ENCODE measurements at regions of chr4 and their contacts with region 1.

Region 1: GRCh38 chr4:39846120-39846519 is 131.6 kb downstream of the PDS5A start:
- DNase-seq: no peak
- ATAC-seq: no peak
- H3K4me3 Mint-ChIP-seq: no peak overlapping the region
- H3K27ac Mint-ChIP-seq: no peak overlapping the region
- H3K4me1 Mint-ChIP-seq: no peaks in the 10 kb centered on the region
- H3K27me3 Mint-ChIP-seq: no peaks in the 10 kb centered on the region
- CTCF ChIP-seq: no peak

Region 2: DNA sequence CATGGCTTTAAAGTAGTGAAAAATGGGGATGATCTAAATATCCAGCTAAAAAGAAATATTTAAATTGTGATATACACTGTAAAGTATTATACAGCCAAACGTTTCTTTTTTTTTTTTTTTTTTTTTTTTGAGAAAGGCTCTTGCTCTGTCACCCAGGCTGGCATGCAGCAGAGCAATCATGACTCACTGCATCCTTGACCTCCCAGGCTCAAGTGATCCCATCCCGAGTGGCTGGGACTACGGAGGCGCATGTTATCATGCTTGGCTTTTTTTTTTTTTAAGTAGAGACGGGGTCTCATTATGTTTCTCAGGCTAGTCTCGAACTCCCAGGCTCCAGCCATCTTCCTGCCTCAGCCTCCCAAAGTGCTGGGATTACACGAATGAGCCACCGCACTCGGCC is 224.5 kb before region 1 on chr4:
- CTCF ChIA-PET with region 1: no interaction called
- POLR2A ChIA-PET with region 1: no interaction called
- intact Hi-C with region 1: no loop called
- DNase-seq: no peak
- ATAC-seq: no peak
- H3K4me3 Mint-ChIP-seq: no peak overlapping the region
- H3K27ac Mint-ChIP-seq: no peak overlapping the region
- H3K4me1 Mint-ChIP-seq: peaks cover 5% of the 10 kb centered on the region
- H3K27me3 Mint-ChIP-seq: no peaks in the 10 kb centered on the region
- CTCF ChIP-seq: no peak

Region 3: GRCh38 chr4:39741401-39741800 is 104.7 kb before region 1 on chr4:
- CTCF ChIA-PET with region 1: no interaction called
- POLR2A ChIA-PET with region 1: no interaction called
- intact Hi-C with region 1: no loop called
- DNase-seq: no peak
- ATAC-seq: no peak
- H3K4me3 Mint-ChIP-seq: no peak overlapping the region
- H3K27ac Mint-ChIP-seq: no peak overlapping the region
- H3K4me1 Mint-ChIP-seq: peaks cover 14% of the 10 kb centered on the region
- H3K27me3 Mint-ChIP-seq: no peaks in the 10 kb centered on the region
- CTCF ChIP-seq: no peak

Region 4: GRCh38 chr4:39792529-39792928 is 53.6 kb before region 1 on chr4:
- CTCF ChIA-PET with region 1: no interaction called
- POLR2A ChIA-PET with region 1: no interaction called
- intact Hi-C with region 1: loop called (anchors 2 kb)
- DNase-seq: no peak
- ATAC-seq: no peak
- H3K4me3 Mint-ChIP-seq: no peak overlapping the region
- H3K27ac Mint-ChIP-seq: no peak overlapping the region
- H3K4me1 Mint-ChIP-seq: no peaks in the 10 kb centered on the region
- H3K27me3 Mint-ChIP-seq: no peaks in the 10 kb centered on the region
- CTCF ChIP-seq: no peak

Region 5: GRCh38 chr4:39987485-39987884 is 141.4 kb after region 1 on chr4:
- CTCF ChIA-PET with region 1: no interaction called
- POLR2A ChIA-PET with region 1: no interaction called
- intact Hi-C with region 1: no loop called
- DNase-seq: no peak
- ATAC-seq: no peak
- H3K4me3 Mint-ChIP-seq: no peak overlapping the region
- H3K27ac Mint-ChIP-seq: no peak overlapping the region
- H3K4me1 Mint-ChIP-seq: no peaks in the 10 kb centered on the region
- H3K27me3 Mint-ChIP-seq: no peaks in the 10 kb centered on the region
- CTCF ChIP-seq: no peak

Region 6: GRCh38 chr4:40395908-40396793 is 550.0 kb after region 1 on chr4:
- CTCF ChIA-PET with region 1: no interaction called
- POLR2A ChIA-PET with region 1: no interaction called
- intact Hi-C with region 1: no loop called
- DNase-seq: no peak
- ATAC-seq: no peak
- H3K4me3 Mint-ChIP-seq: no peak overlapping the region
- H3K27ac Mint-ChIP-seq: no peak overlapping the region
- H3K4me1 Mint-ChIP-seq: no peaks in the 10 kb centered on the region
- H3K27me3 Mint-ChIP-seq: no peaks in the 10 kb centered on the region
- CTCF ChIP-seq: no peak

Measured in activated CD8-positive, alpha-beta T cell treated with anti-CD3 and anti-CD28 coated beads for 36 hours (primary cell).